ENCODE measurements at regions of chr17 and their contacts with region 1.

Region 1: DNA sequence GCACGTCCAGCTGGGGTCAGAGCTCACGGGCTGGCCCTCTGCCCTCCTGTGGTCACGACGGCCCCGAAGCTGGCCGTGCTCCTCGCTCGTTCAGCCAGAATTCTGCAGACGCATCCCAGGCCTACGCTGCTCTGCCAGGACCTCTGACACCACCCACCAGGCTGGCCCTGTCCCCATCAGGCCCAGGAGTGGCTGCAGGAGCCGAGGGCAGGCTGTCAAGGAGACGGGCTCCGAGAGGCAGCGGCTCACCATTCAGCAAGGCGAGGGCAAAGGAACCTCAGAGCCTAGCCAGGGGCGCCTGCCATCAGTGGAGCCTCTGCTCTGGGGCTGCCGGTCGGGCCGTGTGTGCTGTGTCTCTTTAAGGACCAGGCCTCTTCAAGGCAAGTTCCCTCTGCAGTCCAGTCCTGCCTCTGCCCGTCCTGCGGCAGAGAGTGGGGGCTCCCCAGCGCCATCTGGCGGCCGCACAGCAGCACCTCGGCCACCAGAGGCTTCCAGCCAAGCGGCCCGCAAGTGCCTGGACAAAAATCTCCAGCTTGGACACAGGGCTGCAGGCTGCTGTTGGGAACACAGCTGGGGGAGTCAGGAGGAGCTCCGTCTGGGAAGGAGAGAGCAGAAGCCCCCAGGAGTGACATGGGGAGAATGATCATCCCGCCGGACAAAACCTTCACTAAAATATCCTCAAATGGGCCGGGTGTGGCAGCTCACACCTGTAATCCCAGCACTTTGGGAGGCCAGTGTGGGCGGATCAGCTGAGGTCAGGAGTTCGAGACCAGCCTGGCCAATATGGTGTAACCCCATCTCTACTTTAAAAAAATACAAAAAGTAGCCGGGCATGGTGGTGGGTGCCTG is 7.4 kb upstream of the ABR start:
- DNase-seq: peak; percentile 80
- H3K4me3 Mint-ChIP-seq: no peak overlapping the region
- H3K27ac Mint-ChIP-seq: no peak overlapping the region
- H3K4me1 Mint-ChIP-seq: peaks cover 7% of the 10 kb centered on the region
- H3K27me3 Mint-ChIP-seq: peaks cover 20% of the 10 kb centered on the region

Region 2: DNA sequence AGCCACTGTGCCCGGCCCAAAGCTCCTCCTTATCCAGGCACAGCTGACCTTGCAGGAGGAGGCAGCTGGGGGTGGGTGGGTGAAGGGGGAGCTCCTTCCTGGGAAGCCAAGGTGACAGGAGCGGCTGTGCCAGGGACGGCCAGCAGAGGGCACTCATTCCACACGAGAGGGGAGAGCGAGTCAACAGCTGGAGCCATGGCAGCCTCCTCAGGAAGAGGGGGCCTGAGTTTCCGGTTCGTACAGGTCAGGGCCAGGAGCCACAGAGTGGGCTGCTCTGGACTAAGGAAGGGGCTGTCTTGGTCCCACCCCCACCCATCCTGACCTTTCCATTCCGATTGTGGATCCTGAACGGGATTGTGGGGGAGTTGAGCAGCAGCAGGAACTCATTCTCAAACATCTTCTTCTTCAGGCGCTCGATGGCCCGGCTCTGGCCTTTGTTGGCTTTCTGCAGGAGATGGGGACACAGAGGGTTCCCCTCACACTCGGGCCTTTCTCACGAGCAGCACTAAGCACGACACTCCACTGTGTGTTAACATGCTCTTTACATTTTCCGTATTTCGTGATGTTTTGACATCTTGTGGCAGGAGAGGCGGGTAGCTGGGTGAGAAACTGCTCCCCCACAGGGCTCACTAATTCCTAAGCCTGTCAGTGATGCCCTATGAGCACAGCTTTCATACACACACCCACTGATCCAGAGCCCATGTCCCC is 128.6 kb before region 1 on chr17:
- CTCF ChIA-PET with region 1: interaction called, 20 read pairs
- POLR2A ChIA-PET with region 1: no interaction called
- DNase-seq: peak; percentile 74
- H3K4me3 Mint-ChIP-seq: no peak overlapping the region
- H3K27ac Mint-ChIP-seq: no peak overlapping the region
- H3K4me1 Mint-ChIP-seq: peaks cover 14% of the 10 kb centered on the region
- H3K27me3 Mint-ChIP-seq: no peaks in the 10 kb centered on the region

Region 3: GRCh38 chr17:1197781-1198490 is 10.8 kb after region 1 on chr17:
- CTCF ChIA-PET with region 1: interaction called, 74 read pairs
- POLR2A ChIA-PET with region 1: interaction called, 6 read pairs
- DNase-seq: peak; percentile 84
- H3K4me3 Mint-ChIP-seq: peak overlapping the region; percentile 11
- H3K27ac Mint-ChIP-seq: peak overlapping the region; percentile 82
- H3K4me1 Mint-ChIP-seq: peaks cover 61% of the 10 kb centered on the region
- H3K27me3 Mint-ChIP-seq: peaks cover 3% of the 10 kb centered on the region

Region 4: GRCh38 chr17:1374431-1375177 is 187.5 kb after region 1 on chr17:
- CTCF ChIA-PET with region 1: no interaction called
- POLR2A ChIA-PET with region 1: no interaction called
- DNase-seq: no peak
- H3K4me3 Mint-ChIP-seq: no peak overlapping the region
- H3K27ac Mint-ChIP-seq: peak overlapping the region; percentile 83
- H3K4me1 Mint-ChIP-seq: peaks cover 69% of the 10 kb centered on the region
- H3K27me3 Mint-ChIP-seq: no peaks in the 10 kb centered on the region